HCT116 (cell line): ENCODE measurements at regions of chr11 and their contacts with region 1.

Region 1: DNA sequence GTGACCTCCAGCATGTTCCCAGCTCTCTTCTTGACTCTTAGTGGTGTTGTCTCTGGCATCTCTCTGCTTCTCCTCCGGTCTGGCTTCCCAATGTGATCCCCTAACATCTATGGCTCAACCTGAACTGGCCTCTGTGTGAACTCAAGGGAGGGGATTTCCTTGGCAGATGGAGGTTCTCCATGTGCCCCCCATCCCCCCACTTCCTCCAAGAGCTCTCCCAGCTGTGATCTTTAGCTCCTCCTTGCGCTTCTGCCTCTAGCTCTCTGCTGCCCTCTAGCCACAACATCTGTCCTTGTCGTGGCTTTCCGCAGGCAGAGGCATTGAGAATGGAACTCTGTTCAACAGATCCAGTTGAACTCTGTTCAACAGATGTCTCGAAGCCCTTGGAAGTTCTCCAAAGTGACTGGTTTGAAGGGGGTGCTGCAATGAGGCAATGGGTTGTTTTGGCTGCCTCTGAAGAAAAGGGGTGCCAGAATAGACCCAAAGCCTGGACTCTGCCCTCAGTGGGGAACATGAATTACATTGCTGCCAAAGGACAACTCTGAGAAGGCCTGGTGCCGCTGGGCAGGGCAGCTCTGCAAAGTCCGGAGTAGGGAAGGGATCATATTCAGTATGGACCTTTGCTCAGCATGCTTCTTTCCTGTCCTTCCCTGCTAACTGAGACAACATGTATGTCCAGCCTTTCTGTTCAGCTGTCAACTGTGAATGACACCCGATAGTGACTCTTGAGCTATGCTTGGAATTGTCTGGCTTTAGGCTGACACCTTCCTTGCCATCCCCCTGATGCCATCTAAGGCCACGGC is 61.9 kb downstream of the ADM start:
- DNase-seq: peak; percentile 92
- ATAC-seq: peak; percentile 97
- H3K4me3 ChIP-seq: no peak overlapping the region
- H3K27ac ChIP-seq: peak overlapping the region; percentile 11; the same call in 1 of the 2 replicates
- H3K4me1 ChIP-seq: peaks cover 3 to 15% of the 10 kb centered on the region in 2 experiments; a peak in 3 of 4 replicates
- H3K27me3 ChIP-seq: no peaks in the 10 kb centered on the region
- CTCF ChIP-seq: peak; percentile 94 to 99 (median 99)
- POLR2A ChIP-seq: no peak
- RAD21 ChIP-seq: peak; percentile 97

Region 2: DNA sequence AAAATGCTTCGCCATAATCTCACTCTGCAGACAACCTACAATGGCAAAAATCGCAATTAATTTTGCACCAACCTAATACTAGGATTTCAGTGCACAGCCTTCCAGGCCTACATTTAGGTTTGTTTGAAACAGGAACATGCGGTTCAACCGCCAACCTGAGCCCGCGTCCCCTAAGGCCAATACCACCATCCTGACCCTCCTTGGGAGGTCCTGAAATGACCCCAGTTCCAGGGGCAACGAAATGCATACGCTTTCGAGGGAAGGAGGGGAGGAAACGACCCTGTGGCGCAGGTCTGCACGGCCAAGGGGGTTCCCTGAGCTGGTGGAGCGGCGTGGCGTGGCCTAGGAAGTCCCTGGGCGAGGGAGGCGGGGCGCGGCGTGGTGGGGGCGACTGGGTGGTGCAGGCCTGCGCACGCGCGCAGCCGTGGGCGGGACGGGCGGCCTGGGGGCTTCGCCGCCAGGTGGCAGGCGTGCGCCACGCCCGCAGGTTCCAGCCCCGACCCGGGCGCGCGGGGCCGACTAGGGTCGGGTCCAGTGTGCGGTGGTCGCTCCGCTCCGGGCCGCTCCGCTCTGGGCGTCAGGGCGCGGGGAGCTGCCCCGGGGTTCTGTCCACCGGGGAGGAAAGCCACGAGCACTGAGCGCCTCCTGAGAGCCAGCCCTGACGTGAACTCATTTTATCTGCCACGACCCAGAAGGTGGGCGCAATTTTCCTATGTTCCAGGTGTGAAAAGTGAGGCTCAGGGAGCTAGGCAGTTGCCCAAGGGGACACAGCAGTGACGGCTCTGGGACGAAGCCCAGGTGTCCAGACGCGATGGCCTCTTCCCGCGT is 608.7 kb before region 1 on chr11:
- CTCF ChIA-PET with region 1: interaction called, 15 read pairs
- POLR2A ChIA-PET with region 1: interaction called, 3 read pairs
- RAD21 ChIA-PET with region 1: no interaction called
- intact Hi-C with region 1: loop called (anchors 1 kb)
- DNase-seq: peak; percentile 42
- ATAC-seq: peak; percentile 59
- H3K4me3 ChIP-seq: peak overlapping the region; percentile 71 to 74
- H3K27ac ChIP-seq: peak overlapping the region; percentile 95
- H3K4me1 ChIP-seq: peaks cover 17 to 34% of the 10 kb centered on the region in 2 experiments
- H3K27me3 ChIP-seq: no peaks in the 10 kb centered on the region
- CTCF ChIP-seq: peak in 2 of 3 experiments; percentile 55 to 66; a peak in 4 of 6 replicates
- POLR2A ChIP-seq: no peak
- RAD21 ChIP-seq: peak; percentile 65

Region 3: DNA sequence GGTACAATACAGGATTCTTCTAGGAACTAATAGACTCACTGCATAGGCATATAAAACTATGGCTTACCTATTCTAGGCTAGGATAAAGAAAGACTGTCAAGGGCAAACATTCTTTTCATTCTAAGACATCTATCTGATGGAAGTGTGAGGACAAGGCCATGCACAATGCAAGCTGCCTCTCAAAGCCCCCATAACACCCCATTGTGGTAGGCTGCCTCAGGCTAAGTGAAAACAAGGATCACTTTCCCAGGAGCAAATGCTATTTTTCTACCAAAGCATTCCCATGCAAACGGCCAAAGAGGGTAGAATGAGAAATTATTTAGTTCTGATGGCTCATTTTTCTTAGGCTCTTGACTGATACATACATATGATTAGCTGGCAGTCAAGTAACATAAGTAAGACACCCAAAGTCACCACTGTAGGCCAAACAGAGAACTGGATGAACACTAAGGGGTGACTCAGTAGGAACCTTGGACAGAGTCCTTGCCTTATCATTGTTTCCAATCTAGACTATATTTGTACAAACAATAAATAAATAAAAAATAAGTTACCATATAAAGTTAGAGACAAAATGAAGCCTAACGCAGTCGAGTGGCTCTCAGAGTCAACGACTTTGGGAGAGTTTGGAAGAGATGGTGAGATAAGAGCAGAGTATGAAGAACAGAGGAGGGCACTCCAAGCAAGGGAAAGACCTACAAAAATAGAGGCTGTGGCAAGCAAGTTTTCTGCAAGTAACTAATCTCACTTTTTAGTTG is 376.4 kb before region 1 on chr11:
- CTCF ChIA-PET with region 1: no interaction called
- POLR2A ChIA-PET with region 1: no interaction called
- RAD21 ChIA-PET with region 1: no interaction called
- intact Hi-C with region 1: no loop called
- DNase-seq: no peak
- ATAC-seq: no peak
- H3K4me3 ChIP-seq: no peak overlapping the region
- H3K27ac ChIP-seq: no peak overlapping the region
- H3K4me1 ChIP-seq: no peaks in the 10 kb centered on the region
- H3K27me3 ChIP-seq: no peaks in the 10 kb centered on the region
- CTCF ChIP-seq: no peak
- POLR2A ChIP-seq: no peak
- RAD21 ChIP-seq: peak; percentile 15; the same call in 1 of the 2 replicates

Region 4: GRCh38 chr11:10208131-10208575 is 158.6 kb before region 1 on chr11:
- CTCF ChIA-PET with region 1: interaction called, 3 read pairs
- POLR2A ChIA-PET with region 1: no interaction called
- RAD21 ChIA-PET with region 1: no interaction called
- intact Hi-C with region 1: loop called (anchors 1 kb)
- DNase-seq: peak; percentile 58
- ATAC-seq: peak; percentile 78
- H3K4me3 ChIP-seq: no peak overlapping the region
- H3K27ac ChIP-seq: no peak overlapping the region
- H3K4me1 ChIP-seq: peaks cover 0 to 8% of the 10 kb centered on the region in 2 experiments; a peak in 1 of 4 replicates
- H3K27me3 ChIP-seq: no peaks in the 10 kb centered on the region
- CTCF ChIP-seq: peak; percentile 54 to 73 (median 57); a peak in 5 of 6 replicates
- POLR2A ChIP-seq: no peak
- RAD21 ChIP-seq: peak; percentile 65

Region 5: DNA sequence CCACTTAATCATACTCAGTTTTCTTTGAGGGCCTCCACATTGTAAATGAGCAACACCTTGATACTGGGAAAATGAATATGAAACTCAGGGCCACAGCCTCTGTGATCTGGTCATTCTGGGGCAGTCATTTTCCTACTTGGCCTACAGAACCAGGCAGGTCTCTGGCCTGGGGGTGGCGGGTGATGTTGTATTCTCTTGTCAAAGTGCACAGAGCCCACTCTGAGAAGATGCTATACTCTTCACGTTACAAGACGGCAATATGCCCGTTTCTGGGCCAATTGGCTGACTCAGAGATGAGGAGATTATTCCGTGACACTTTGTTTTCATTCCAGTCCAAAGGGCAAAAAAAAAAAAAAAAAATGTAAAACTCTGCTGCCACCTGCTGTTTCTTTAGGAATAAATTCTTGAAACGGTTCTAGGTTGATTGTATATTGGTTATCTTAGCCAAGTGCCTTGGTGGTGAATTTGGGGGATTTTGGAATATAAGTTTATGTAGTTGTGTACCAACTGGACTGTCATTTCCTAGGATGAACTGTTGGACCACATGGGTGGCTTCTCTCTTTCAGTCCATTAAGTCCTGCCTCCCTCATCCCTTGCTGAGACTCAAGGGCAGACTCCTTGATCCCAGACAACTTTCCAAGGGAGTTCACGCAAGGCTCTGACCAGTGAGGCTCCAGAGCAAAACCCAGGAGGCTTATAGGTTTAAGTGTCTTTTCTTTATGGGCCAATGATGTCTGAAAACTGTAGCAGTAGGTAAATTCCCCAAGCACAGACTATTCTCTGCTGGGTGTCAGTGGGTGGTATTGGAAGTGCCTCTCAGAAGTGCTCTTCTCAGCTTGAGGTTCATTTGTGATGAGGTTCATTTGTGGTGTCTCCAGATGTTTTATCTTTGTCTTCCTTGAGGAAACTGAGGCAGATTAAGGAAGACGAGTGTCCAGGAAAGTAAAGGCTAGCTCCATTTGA is 43.7 kb before region 1 on chr11:
- CTCF ChIA-PET with region 1: interaction called, 21 read pairs
- POLR2A ChIA-PET with region 1: no interaction called
- RAD21 ChIA-PET with region 1: interaction called, 3 read pairs
- intact Hi-C with region 1: no loop called
- DNase-seq: peak; percentile 81
- ATAC-seq: peak; percentile 76
- H3K4me3 ChIP-seq: peak overlapping the region; percentile 8 to 32
- H3K27ac ChIP-seq: no peak overlapping the region
- H3K4me1 ChIP-seq: peaks cover 12 to 21% of the 10 kb centered on the region in 2 experiments; a peak in 3 of 4 replicates
- H3K27me3 ChIP-seq: no peaks in the 10 kb centered on the region
- CTCF ChIP-seq: peak; percentile 25 to 87 (median 66); a peak in 5 of 6 replicates
- POLR2A ChIP-seq: no peak
- RAD21 ChIP-seq: peak; percentile 89

Region 6: DNA sequence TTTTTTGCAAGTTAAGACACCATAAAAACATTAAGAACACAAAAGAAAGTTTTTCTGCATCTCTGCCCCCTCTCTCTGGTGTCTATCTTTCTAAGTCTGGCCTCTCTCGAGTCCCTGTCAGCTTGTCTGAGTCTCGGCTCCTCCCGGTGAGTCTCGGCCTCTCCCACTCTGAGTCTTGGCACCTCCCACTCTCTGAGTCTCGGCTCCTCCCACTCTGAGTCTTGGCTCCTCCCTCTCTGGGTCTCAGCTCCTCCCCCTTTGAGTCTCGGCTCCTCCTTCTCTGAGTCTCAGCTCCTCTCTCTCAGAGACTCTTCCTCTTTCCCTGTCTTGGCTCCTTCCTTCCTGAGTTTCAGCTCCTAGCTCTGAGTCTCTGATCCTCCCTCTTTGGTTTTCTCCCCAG is 15.7 kb after region 1 on chr11:
- CTCF ChIA-PET with region 1: interaction called, 13 read pairs
- POLR2A ChIA-PET with region 1: no interaction called
- RAD21 ChIA-PET with region 1: no interaction called
- intact Hi-C with region 1: no loop called
- DNase-seq: peak; percentile 63
- ATAC-seq: peak; percentile 100
- H3K4me3 ChIP-seq: no peak overlapping the region
- H3K27ac ChIP-seq: no peak overlapping the region
- H3K4me1 ChIP-seq: peaks cover 2 to 16% of the 10 kb centered on the region in 2 experiments; a peak in 3 of 4 replicates
- H3K27me3 ChIP-seq: no peaks in the 10 kb centered on the region
- CTCF ChIP-seq: no peak
- POLR2A ChIP-seq: no peak
- RAD21 ChIP-seq: no peak

Region 7: GRCh38 chr11:10405855-10406592 is 39.3 kb after region 1 on chr11:
- CTCF ChIA-PET with region 1: interaction called, 34 read pairs
- POLR2A ChIA-PET with region 1: interaction called, 5 read pairs
- RAD21 ChIA-PET with region 1: interaction called, 3 to 6 read pairs
- intact Hi-C with region 1: loop called (anchors 2 kb)
- DNase-seq: peak; percentile 87
- ATAC-seq: peak; percentile 92
- H3K4me3 ChIP-seq: no peak overlapping the region
- H3K27ac ChIP-seq: peak overlapping the region; percentile 43; the same call in 1 of the 2 replicates
- H3K4me1 ChIP-seq: peaks cover 21 to 43% of the 10 kb centered on the region in 2 experiments
- H3K27me3 ChIP-seq: no peaks in the 10 kb centered on the region
- CTCF ChIP-seq: peak; percentile 78 to 98 (median 88)
- POLR2A ChIP-seq: no peak
- RAD21 ChIP-seq: peak; percentile 100

Region 8: DNA sequence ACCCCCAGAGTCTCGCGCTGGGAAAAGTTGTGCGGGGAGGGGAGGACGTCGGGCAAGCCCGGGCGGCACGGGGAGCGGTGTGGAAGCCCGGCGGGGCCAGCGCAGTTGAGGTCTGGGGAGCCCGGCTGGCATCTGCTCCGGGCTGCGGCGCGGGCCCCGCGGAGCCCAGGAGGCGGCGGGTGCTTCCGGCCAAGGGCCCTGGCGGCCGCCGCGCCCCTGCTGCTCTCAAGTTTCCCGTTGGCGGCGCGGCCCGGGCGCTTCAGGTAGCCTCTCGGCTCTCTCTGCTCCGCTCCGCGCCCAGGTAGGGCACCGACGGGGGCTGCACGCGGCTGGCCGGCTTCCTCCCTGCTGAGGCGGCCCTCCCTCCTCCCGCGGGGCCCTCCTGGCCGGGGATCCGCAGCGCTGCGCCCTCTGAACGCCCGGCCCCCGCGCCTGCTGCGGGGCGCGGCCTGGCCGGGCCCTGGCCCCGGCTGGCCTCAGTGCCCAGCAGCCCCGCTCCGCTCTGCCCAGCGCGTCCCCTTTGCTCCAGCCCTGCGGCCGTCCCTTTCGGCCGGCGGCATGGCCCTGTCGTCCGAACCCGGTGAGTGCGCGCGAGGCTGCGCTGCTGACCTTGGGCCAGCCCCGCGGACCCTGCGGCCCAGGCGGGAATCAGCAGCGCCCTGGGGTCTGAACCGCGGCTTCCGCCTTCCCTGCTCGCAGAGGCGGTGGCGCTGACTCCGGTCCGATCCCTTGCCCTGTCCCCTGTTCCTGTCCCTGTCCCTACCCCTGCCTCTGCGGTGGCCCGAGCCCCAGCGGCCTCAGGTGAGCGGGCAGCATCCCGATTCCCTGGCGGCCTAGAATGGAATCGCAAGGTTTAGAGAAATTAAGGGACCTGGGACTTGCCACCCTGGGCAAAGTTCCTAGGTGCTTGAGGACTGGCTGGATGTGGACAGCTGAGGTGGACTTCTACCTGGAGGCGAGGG is 84.0 kb after region 1 on chr11:
- CTCF ChIA-PET with region 1: interaction called, 13 read pairs
- POLR2A ChIA-PET with region 1: no interaction called
- RAD21 ChIA-PET with region 1: no interaction called
- intact Hi-C with region 1: loop called (anchors 5 kb)
- DNase-seq: peak; percentile 62
- ATAC-seq: peak; percentile 69
- H3K4me3 ChIP-seq: peak overlapping the region; percentile 51 to 64
- H3K27ac ChIP-seq: peak overlapping the region; percentile 80
- H3K4me1 ChIP-seq: peaks cover 21 to 53% of the 10 kb centered on the region in 2 experiments
- H3K27me3 ChIP-seq: no peaks in the 10 kb centered on the region
- CTCF ChIP-seq: peak in 2 of 3 experiments; percentile 75 to 80; a peak in 4 of 6 replicates
- POLR2A ChIP-seq: peak; percentile 11
- RAD21 ChIP-seq: no peak